AG04449 (cell line): ENCODE measurements at regions of chr10 and their contacts with region 1.

Region 1: DNA sequence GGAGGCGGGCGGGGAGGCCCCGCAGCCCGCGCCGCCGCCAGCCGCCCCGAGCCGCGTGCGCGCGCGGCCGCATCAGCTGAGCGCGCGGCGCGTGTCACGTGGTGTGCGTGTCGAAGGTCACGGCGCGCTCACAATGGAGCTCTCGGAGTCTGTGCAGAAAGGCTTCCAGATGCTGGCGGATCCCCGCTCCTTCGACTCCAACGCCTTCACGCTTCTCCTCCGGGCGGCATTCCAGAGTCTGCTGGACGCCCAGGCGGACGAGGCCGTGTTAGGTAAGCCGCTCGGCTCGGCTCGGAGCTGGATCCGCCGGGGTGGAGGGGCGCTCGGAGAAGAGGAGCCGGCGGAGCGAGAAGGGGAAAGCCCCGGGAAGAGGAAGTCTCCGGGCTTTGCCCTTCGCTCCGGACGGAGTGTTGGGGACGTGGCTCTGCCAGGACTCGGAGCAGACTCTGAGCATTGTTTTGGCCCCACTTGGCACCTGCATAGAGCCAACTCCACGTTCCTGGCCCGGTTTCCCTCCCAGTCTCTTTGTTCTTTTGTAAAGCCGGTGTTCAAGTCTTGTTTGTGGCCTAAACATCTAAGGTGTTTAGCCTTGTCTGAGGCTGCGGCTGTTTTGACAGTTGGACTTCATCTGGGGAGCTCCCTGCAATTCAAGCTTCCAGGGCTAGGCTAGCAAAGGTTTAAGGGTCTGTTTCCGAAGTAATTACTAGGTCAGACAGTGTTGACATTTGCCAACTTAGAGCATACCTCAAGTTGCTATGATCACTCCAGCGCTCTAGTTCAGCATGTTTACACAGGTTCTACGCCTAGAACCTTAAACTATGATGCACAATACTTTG is at the start of gene COMMD3:
- DNase-seq: no peak
- H3K4me3 ChIP-seq: peak within 1 kb of the TSS; percentile 74
- CTCF ChIP-seq: no peak

Region 2: DNA sequence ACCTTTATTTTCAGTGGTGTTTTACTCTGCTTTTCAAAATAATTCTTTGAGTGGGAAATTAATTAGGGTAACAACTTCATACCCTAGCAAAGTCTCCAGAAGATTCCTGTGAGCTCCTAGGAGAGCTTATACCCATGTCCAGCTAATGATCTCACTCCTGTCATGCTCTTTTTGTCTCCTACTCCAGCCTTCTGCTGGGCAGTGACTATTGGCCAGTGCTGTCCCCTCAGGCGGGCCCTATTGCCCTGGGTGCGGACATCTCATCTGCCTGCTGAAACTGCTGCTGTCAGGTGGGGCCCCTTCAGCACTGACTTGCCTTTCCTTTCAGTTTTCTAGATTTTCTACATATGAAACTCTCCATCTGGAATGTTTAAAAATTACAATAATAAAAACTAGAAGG is 179.0 kb before region 1 on chr10:
- CTCF ChIA-PET with region 1: no interaction called
- POLR2A ChIA-PET with region 1: no interaction called
- DNase-seq: no peak
- H3K4me3 ChIP-seq: no peak overlapping the region
- CTCF ChIP-seq: no peak

Region 3: DNA sequence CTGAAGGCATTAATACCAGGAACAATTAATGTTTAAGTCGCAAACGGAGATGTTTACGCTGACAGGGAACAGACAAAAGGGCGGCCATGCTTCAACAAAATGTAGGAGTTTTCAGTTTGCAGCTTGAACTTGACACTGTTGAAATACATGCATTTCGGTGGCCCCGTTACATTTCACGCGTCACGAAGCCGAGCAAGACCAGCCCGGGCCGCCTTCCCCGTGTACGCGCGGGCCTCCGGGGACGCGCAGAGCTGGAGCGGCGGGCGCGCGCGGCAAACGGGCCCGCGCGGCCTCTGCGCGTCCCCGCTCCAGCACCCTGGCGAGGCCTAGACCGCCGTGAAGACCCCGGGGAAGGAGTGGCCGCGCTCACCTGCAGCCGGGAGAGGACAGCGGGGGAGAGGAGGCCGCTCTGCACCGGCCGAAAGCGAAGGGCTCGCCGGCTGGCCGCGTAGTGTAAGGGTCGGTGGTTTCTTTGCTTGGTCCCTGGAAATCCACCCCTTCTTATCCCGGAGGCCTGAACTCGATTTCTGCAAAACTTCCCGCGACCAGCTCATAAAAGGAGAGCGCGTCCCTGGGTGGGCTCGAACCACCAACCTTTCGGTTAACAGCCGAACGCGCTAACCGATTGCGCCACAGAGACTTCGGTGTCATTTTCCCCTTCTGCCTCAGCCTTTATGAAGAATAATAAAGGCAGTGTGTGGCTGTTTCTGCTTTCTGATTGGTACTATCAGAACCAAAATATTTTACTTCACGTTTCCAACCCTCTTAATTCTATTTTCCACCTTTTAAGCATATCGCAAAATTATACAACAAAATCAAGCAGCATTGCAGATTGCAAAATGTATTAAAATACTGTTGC is 87.3 kb before region 1 on chr10:
- CTCF ChIA-PET with region 1: no interaction called
- POLR2A ChIA-PET with region 1: interaction called, 16 read pairs
- DNase-seq: peak; percentile 52
- H3K4me3 ChIP-seq: peak overlapping the region; percentile 70
- CTCF ChIP-seq: no peak

Region 4: DNA sequence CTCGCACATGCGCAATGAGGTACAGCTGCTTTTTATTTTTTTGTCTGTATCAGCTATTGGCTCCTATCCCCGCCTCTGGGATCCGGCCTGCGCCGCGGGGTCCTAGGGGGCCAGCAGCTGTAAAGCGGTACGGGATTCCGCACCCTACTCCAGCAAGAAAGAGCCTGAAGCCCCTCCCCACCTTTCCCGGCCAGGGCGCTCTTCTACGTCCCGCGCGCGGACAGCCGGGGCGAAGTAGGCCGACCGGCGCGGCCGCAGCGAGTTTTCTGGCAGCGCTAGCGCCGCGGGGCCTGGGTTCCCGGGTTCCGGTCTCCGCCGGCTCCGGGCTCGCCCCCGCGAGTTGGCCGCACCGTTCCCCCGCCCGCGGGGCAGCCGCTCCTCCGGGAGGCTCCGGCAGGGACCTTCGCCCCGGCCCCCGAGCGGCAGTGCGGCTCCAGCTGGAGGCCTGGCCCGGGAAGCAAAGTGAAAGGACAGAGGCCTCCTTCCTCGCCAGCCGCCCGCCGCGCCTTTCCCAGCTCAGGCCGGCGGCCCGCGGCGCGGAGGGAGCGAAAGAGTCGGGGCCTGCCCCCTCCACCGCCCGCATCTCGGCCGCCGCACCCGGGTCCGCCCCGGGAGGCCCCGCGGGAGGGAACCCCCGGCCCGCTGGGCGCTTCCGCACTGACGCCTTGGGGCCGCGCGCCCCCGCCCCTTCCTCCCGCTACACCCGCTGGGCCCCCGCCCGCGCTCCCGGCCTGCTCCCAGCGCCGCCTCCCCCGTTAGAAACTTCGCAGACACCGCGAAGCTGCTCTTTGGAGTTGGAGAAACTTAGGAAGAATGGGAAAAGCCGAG is 24.1 kb after region 1 on chr10:
- CTCF ChIA-PET with region 1: interaction called, 3 read pairs
- POLR2A ChIA-PET with region 1: interaction called, 11 read pairs
- DNase-seq: no peak
- H3K4me3 ChIP-seq: peak overlapping the region; percentile 73
- CTCF ChIP-seq: no peak